ENCODE measurements at regions of chr1 and their contacts with region 1.

Region 1: DNA sequence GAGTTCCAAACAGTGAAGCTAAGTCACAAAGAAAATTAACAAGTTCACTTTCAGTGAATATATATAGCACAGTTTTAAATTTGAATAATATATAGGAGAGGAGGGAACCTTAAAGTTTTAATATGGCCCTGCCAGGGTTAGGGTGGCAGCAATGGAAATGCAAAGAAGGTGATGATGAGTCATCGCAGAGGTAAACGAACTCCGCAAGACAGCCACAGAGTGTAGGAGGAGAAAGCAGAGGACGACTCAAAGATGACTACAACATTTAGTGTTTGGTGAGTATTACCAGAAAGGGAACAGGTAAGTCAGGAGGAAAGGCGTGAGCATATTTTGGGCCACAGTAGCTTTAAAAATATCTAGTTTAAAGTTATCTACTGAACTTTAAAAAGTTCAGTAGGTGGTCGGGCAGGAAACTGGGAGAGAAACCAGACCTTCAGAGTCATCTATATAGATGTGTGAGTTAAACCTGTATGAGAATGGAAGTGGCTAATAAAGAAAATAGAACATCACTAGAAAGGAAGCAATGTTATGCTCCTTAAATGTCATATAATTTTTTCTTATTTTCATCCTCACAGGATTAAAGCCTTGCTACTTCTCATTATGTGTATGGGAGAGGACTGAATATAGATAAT is 75.7 kb downstream of the UCHL5 start:
- DNase-seq: no peak
- H3K4me3 Mint-ChIP-seq: peak overlapping the region; percentile 41
- H3K27ac Mint-ChIP-seq: peak overlapping the region; percentile 88
- H3K4me1 Mint-ChIP-seq: peaks cover 56% of the 10 kb centered on the region
- H3K27me3 Mint-ChIP-seq: no peaks in the 10 kb centered on the region

Region 2: GRCh38 chr1:192639607-192640368 is 343.7 kb before region 1 on chr1:
- intact Hi-C with region 1: loop called (anchors 1 kb)
- DNase-seq: no peak
- H3K4me3 Mint-ChIP-seq: no peak overlapping the region
- H3K27ac Mint-ChIP-seq: peak overlapping the region; percentile 8
- H3K4me1 Mint-ChIP-seq: peaks cover 6% of the 10 kb centered on the region
- H3K27me3 Mint-ChIP-seq: peaks cover 2% of the 10 kb centered on the region

Region 3: DNA sequence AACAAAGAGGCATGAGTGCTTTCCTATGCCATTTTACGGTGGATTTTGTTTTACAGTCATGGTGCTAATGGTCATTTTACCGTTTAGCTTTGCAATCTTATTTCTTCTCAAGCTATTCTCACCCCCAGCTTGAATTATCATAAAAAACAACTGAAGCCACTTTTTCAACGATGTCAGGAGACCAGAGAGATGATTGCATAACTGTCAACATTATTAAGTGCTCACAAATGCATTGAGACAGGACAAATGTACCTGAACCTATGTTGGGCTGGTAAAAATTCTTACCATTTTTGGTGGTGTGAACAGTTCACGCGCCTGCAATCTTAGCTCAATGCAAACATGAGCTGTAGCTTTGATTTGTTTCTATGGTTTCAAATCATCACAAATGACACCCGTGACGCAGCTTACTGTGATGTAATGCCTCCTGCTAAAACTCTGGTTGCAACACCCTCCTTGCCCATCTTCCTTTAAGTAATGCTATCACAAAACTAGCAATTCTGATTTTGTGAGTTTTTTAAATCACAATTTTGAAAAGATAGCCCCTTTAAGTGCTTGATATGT is 28.7 kb before region 1 on chr1:
- intact Hi-C with region 1: no loop called
- DNase-seq: no peak
- H3K4me3 Mint-ChIP-seq: no peak overlapping the region
- H3K27ac Mint-ChIP-seq: no peak overlapping the region
- H3K4me1 Mint-ChIP-seq: peaks cover 3% of the 10 kb centered on the region
- H3K27me3 Mint-ChIP-seq: no peaks in the 10 kb centered on the region

Region 4: GRCh38 chr1:193019442-193020026 is 36.1 kb after region 1 on chr1:
- intact Hi-C with region 1: loop called (anchors 5 kb)
- DNase-seq: no peak
- H3K4me3 Mint-ChIP-seq: no peak overlapping the region
- H3K27ac Mint-ChIP-seq: no peak overlapping the region
- H3K4me1 Mint-ChIP-seq: no peaks in the 10 kb centered on the region
- H3K27me3 Mint-ChIP-seq: no peaks in the 10 kb centered on the region